K562 (cell line): ENCODE measurements at regions of chr11 and their contacts with region 1.

Region 1: DNA sequence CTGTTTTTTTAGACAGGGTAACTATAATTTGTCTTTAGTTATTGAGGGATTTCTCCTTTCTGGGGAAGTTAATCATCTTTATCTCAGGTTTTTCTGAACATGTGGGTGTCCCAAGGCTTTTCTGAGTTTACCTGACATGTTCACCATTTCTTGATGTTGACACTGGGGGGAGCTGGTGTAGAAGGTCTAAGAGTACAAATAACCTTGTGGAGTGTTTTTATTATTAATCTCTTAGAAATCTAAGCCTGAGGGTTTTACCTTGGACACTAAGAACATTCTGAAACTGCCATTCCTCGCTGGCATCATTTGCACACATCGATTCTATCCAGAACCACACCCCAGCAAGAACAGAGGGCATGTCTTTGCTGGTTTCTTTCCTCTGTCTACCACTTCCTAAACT is 15.6 kb upstream of the C11orf91 start:
- DNase-seq: peak in 3 of 4 experiments; percentile 24 to 59 (median 27)
- ATAC-seq: peak; percentile 79
- H3K4me3 ChIP-seq: no peak overlapping the region
- H3K27ac ChIP-seq: no peak overlapping the region
- H3K4me1 ChIP-seq: peaks cover 0 to 4% of the 10 kb centered on the region in 2 experiments; a peak in 3 of 5 replicates
- H3K27me3 ChIP-seq: no peaks in the 10 kb centered on the region
- CTCF ChIP-seq: peak; percentile 54 to 66 (median 55); a peak in 4 of 6 replicates
- EP300 ChIP-seq: no peak
- POLR2A ChIP-seq: no peak
- RAD21 ChIP-seq: peak; percentile 65 to 78

Region 2: GRCh38 chr11:33742249-33742851 is 26.1 kb after region 1 on chr11:
- CTCF ChIA-PET with region 1: interaction called, 19 read pairs
- POLR2A ChIA-PET with region 1: interaction called, 18 read pairs
- in situ Hi-C with region 1: no loop called
- intact Hi-C with region 1: loop called (anchors 1 kb)
- DNase-seq: no peak
- ATAC-seq: peak; percentile 54
- H3K4me3 ChIP-seq: no peak overlapping the region
- H3K27ac ChIP-seq: no peak overlapping the region
- H3K4me1 ChIP-seq: peaks cover 4 to 15% of the 10 kb centered on the region in 2 experiments; a peak in 3 of 5 replicates
- H3K27me3 ChIP-seq: no peaks in the 10 kb centered on the region
- CTCF ChIP-seq: peak; percentile 28 to 75 (median 35); a peak in 3 of 6 replicates
- EP300 ChIP-seq: no peak
- POLR2A ChIP-seq: no peak
- RAD21 ChIP-seq: peak; percentile 73 to 79